GM12878 (cell line): ENCODE measurements at regions of chr5 and their contacts with region 1.

Region 1: GRCh38 chr5:108642167-108642906 is 105.4 kb upstream of the FER start:
- DNase-seq: peak; percentile 68
- ATAC-seq: peak; percentile 100
- H3K4me3 ChIP-seq: no peak overlapping the region
- H3K27ac ChIP-seq: no peak overlapping the region
- H3K4me1 ChIP-seq: no peaks in the 10 kb centered on the region
- H3K27me3 ChIP-seq: no peaks in the 10 kb centered on the region
- CTCF ChIP-seq: peak; percentile 94 to 96 (median 94); a peak in 5 of 6 replicates
- EP300 ChIP-seq: no peak
- POLR2A ChIP-seq: no peak
- RAD21 ChIP-seq: peak; percentile 98

Region 2: GRCh38 chr5:108521841-108522506 is 120.4 kb before region 1 on chr5:
- CTCF ChIA-PET with region 1: interaction called, 9 read pairs
- POLR2A ChIA-PET with region 1: no interaction called
- RAD21 ChIA-PET with region 1: no interaction called
- SMC1A ChIA-PET with region 1: interaction called, 4 read pairs
- in situ Hi-C with region 1: no loop called
- intact Hi-C with region 1: loop called (anchors 1 kb)
- DNase-seq: peak; percentile 57
- ATAC-seq: peak; percentile 88
- H3K4me3 ChIP-seq: no peak overlapping the region
- H3K27ac ChIP-seq: peak overlapping the region; percentile 54
- H3K4me1 ChIP-seq: peaks cover 14% of the 10 kb centered on the region
- H3K27me3 ChIP-seq: no peaks in the 10 kb centered on the region
- CTCF ChIP-seq: peak; percentile 54 to 70 (median 69); a peak in 5 of 6 replicates
- EP300 ChIP-seq: no peak
- POLR2A ChIP-seq: no peak
- RAD21 ChIP-seq: peak; percentile 83

Region 3: DNA sequence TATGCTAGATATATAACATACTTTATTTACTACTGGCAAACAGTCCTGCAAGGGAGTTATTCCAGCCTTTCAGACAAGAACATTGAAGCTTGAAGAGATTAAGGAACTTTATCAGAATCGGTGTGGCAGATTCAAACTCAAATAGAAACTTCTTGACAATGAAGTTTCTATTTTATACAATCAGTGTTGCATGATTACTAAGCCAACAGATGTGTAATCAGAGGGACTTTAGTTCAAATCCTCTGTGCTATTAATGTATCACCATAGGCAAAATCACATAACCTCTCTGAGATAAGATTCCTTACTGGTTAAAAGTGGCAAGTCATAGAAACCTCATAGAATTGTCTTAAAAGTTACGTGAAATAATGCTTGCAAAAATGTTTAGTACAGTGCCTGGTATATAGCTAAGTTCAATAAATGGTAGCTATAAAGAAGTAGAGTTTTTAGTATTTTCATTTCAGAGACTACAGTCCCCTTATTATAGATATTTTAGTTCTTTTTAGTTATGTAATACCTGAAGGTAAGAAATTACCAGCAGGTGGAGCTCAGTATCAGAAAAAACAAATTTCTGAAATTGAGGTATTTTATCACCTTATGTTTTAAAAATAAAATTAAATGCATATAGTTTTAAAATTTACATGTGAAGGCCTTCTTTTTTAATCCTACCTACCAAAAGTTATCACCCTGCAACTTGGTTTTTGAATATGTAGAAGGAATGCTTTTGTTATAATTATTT is 277.4 kb after region 1 on chr5:
- CTCF ChIA-PET with region 1: interaction called, 15 read pairs
- POLR2A ChIA-PET with region 1: no interaction called
- RAD21 ChIA-PET with region 1: interaction called, 6 read pairs
- SMC1A ChIA-PET with region 1: interaction called, 3 read pairs
- in situ Hi-C with region 1: no loop called
- intact Hi-C with region 1: loop called (anchors 5 kb)
- DNase-seq: no peak
- ATAC-seq: peak; percentile 70
- H3K4me3 ChIP-seq: no peak overlapping the region
- H3K27ac ChIP-seq: no peak overlapping the region
- H3K4me1 ChIP-seq: no peaks in the 10 kb centered on the region
- H3K27me3 ChIP-seq: no peaks in the 10 kb centered on the region
- CTCF ChIP-seq: peak in 1 of 3 experiments; percentile 14; a peak in 1 of 6 replicates
- EP300 ChIP-seq: no peak
- POLR2A ChIP-seq: no peak
- RAD21 ChIP-seq: peak; percentile 33

Region 4: GRCh38 chr5:109468737-109469420 is 826.5 kb after region 1 on chr5:
- CTCF ChIA-PET with region 1: interaction called, 5 read pairs
- POLR2A ChIA-PET with region 1: no interaction called
- RAD21 ChIA-PET with region 1: interaction called, 8 read pairs
- SMC1A ChIA-PET with region 1: interaction called, 8 read pairs
- in situ Hi-C with region 1: loop called (anchors 25 kb)
- intact Hi-C with region 1: loop called (anchors 2 kb)
- DNase-seq: peak; percentile 63
- ATAC-seq: peak; percentile 95
- H3K4me3 ChIP-seq: no peak overlapping the region
- H3K27ac ChIP-seq: no peak overlapping the region
- H3K4me1 ChIP-seq: peaks cover 7% of the 10 kb centered on the region
- H3K27me3 ChIP-seq: no peaks in the 10 kb centered on the region
- CTCF ChIP-seq: peak; percentile 77 to 90 (median 77)
- EP300 ChIP-seq: no peak
- POLR2A ChIP-seq: no peak
- RAD21 ChIP-seq: peak; percentile 73